ENCODE measurements at regions of chr10 and their contacts with region 1.

Region 1: GRCh38 chr10:58322072-58322834 is 12.6 kb upstream of the UBE2D1 start:
- DNase-seq: peak in 2 of 9 experiments; percentile 12 to 49
- ATAC-seq: no peak
- H3K4me3 ChIP-seq: no peak overlapping the region
- H3K4me3 Mint-ChIP-seq: no peak overlapping the region
- H3K27ac ChIP-seq: no peak overlapping the region
- H3K27ac Mint-ChIP-seq: no peak overlapping the region
- H3K4me1 ChIP-seq: peaks cover 7% of the 10 kb centered on the region
- H3K4me1 Mint-ChIP-seq: peaks cover 12% of the 10 kb centered on the region
- H3K27me3 ChIP-seq: no peaks in the 10 kb centered on the region
- H3K27me3 Mint-ChIP-seq: peaks cover 3% of the 10 kb centered on the region
- CTCF ChIP-seq: no peak

Region 2: GRCh38 chr10:58358314-58358933 is 36.2 kb after region 1 on chr10:
- CTCF ChIA-PET with region 1: no interaction called
- POLR2A ChIA-PET with region 1: no interaction called
- intact Hi-C with region 1: loop called in 1 of 2 experiments (anchors 5 kb)
- DNase-seq: no peak
- ATAC-seq: no peak
- H3K4me3 ChIP-seq: no peak overlapping the region
- H3K4me3 Mint-ChIP-seq: no peak overlapping the region
- H3K27ac ChIP-seq: no peak overlapping the region
- H3K27ac Mint-ChIP-seq: no peak overlapping the region
- H3K4me1 ChIP-seq: peaks cover 20% of the 10 kb centered on the region
- H3K4me1 Mint-ChIP-seq: peaks cover 35% of the 10 kb centered on the region
- H3K27me3 ChIP-seq: no peaks in the 10 kb centered on the region
- H3K27me3 Mint-ChIP-seq: no peaks in the 10 kb centered on the region
- CTCF ChIP-seq: no peak

Measured in CD8-positive, alpha-beta T cell (primary cell).